CD4-positive, alpha-beta memory T cell (primary cell): ENCODE measurements at regions of chr19 and their contacts with region 1.

Region 1: DNA sequence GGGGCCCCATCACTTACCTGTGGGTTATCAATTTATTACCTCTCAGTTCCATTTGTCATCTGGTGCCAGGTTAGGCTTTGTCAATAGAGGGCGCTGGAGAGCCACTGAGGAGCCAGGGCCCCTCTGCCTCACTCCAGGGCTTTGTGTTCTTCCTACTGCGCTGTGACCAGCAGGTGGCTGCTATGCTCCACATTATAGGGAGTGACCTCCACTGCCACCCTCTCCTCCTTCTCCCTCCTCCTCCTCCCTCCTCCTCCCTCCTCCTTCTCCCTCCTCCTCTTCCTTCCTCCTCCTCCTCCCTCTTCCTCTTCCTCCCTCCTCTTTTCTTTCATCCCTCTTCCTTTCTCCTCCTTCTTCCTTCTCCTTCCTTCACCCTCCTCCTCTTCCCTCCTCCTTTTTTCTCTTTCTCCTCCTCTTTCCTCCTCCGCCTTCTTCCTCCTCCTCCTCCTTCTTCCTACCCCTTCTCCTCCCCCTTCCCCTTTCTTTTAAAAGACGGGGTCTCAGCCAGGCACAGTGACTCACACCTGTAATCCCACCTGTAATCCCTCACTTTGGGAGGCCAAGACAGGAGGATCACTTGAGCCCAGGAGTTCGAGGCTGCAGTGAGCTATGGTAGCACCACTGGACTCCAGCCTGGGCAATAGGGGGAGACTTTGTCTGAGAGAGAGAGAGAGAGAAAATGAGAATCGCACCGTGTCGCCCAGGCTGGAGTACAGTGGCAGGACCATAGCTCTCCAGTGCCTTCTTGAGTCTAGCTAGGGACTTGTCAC is 10.3 kb upstream of the ZBTB32 start:
- DNase-seq: peak; percentile 87 to 89 (median 88)
- H3K4me3 ChIP-seq: no peak overlapping the region
- H3K4me3 Mint-ChIP-seq: peak overlapping the region in 1 of 8 donors; percentile 57
- H3K27ac ChIP-seq: no peak overlapping the region
- H3K27ac Mint-ChIP-seq: peak overlapping the region in 6 of 7 donors; percentile 4 to 75 (median 28)
- H3K4me1 ChIP-seq: no peaks in the 10 kb centered on the region
- H3K4me1 Mint-ChIP-seq: peaks cover 0 to 5% (median 2%) of the 10 kb centered on the region in 4 donors
- H3K27me3 ChIP-seq: no peaks in the 10 kb centered on the region
- H3K27me3 Mint-ChIP-seq: no peaks in the 10 kb centered on the region

Region 2: GRCh38 chr19:35665604-35666003 is 28.4 kb before region 1 on chr19:
- CTCF ChIA-PET with region 1: no interaction called
- POLR2A ChIA-PET with region 1: no interaction called
- intact Hi-C with region 1: no loop called
- DNase-seq: no peak
- H3K4me3 ChIP-seq: no peak overlapping the region
- H3K4me3 Mint-ChIP-seq: no peak overlapping the region
- H3K27ac ChIP-seq: no peak overlapping the region
- H3K27ac Mint-ChIP-seq: no peak overlapping the region
- H3K4me1 ChIP-seq: no peaks in the 10 kb centered on the region
- H3K4me1 Mint-ChIP-seq: peaks cover 0 to 5% (median under 1%) of the 10 kb centered on the region in 4 donors
- H3K27me3 ChIP-seq: no peaks in the 10 kb centered on the region
- H3K27me3 Mint-ChIP-seq: peaks cover 6 to 8% of the 10 kb centered on the region in 2 donors

Region 3: DNA sequence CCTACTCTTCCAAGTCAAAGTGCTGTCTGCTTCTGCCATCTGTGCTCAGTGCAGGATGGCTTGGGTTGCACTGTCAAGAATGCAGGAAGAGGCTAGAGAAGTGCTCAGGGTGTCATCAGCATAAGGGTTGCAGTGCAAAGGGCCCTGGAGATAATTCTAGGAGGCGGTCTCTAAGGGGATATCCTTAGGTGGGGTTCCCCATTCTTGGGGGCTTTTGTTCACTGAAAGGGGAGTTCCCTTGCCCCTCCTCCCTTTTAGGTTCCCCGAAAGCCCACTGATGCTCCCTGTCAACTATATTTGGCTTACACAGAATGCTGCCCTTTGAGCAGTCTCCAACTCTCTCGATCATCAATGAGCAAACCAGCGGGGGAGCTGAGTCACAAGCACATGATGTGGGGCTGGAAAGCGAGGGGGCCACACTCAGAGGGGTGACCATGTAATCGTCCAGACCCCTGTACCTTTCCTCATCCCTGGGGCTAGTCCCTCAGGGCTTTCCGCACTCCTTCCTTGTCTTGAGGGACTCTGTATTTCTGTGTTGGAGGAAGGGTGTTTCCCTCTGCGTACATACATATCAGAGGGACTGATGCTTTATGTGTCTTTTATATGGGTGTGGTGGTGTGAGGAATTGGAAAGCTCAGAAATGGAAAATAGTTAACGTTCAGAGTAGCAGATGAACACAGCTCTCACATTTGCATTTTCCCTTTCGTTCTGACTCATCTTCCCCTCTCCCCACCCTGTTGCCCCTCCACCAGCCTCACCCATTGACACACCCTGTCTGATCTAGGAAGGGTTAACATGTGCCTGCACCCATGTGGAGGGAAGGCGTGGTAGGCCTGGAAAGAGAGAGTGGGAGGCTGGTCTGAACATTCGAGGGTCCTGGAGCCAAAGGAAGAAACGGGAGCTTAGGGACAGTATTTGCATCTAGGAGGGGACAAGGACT is 17.0 kb after region 1 on chr19:
- CTCF ChIA-PET with region 1: interaction called, 54 read pairs
- POLR2A ChIA-PET with region 1: interaction called, 3 read pairs
- intact Hi-C with region 1: no loop called
- DNase-seq: peak in 2 of 5 donors; percentile 5 to 58
- H3K4me3 ChIP-seq: peak overlapping the region in 1 of 2 donors; percentile 11
- H3K4me3 Mint-ChIP-seq: peak overlapping the region in 3 of 8 donors; percentile 21 to 67 (median 57)
- H3K27ac ChIP-seq: peak overlapping the region; percentile 40
- H3K27ac Mint-ChIP-seq: peak overlapping the region; percentile 59 to 83 (median 74)
- H3K4me1 ChIP-seq: peaks cover 60% of the 10 kb centered on the region
- H3K4me1 Mint-ChIP-seq: peaks cover 35 to 56% (median 47%) of the 10 kb centered on the region in 4 donors
- H3K27me3 ChIP-seq: no peaks in the 10 kb centered on the region
- H3K27me3 Mint-ChIP-seq: no peaks in the 10 kb centered on the region

Region 4: DNA sequence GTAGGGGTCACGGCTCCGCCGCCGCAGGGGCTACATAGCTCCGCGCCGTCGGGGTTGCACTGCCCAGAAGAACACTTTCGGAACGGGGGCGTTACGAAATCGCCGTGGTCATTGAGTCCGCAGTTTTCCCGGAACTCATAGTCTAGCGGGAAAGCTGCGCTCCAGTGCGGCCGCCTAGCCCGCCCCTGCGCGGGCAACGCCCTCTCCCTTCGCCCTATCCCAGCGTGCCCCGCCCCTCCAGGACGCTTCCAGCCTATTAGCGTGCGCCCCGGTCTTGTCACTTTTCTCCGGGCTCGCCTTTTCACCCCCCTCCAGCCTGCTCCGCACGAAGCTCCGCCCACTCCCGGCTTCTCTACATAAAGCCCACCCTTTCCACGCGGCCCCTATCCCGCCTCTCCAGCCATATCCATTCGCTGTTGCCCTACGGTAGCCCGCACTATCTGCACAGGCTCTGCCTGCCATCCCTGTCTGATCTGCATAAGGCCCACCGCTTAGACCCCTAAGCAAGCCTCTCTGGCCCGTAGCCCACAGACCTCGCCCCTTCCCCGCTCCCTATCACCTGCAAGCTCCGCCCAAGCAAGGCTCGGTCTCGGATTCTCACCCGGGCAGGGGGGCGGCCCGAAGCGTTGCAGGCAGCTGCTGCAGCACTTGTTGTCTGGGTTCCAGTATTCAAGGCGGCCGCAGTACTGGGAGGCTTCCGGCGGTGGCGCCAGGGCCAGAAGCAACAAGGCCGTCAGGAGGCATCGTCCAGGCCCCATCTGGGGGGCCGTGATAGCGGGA is 46.6 kb after region 1 on chr19:
- CTCF ChIA-PET with region 1: interaction called, 10 read pairs
- POLR2A ChIA-PET with region 1: interaction called, 3 read pairs
- intact Hi-C with region 1: loop called (anchors 1 kb)
- DNase-seq: peak; percentile 90 to 97 (median 91)
- H3K4me3 ChIP-seq: peak overlapping the region; percentile 83 to 88
- H3K4me3 Mint-ChIP-seq: peak overlapping the region; percentile 88 to 98 (median 90)
- H3K27ac ChIP-seq: peak overlapping the region; percentile 77
- H3K27ac Mint-ChIP-seq: peak overlapping the region; percentile 93 to 99 (median 94)
- H3K4me1 ChIP-seq: peaks cover 59% of the 10 kb centered on the region
- H3K4me1 Mint-ChIP-seq: peaks cover 17 to 65% (median 42%) of the 10 kb centered on the region in 4 donors
- H3K27me3 ChIP-seq: no peaks in the 10 kb centered on the region
- H3K27me3 Mint-ChIP-seq: no peaks in the 10 kb centered on the region

Region 5: DNA sequence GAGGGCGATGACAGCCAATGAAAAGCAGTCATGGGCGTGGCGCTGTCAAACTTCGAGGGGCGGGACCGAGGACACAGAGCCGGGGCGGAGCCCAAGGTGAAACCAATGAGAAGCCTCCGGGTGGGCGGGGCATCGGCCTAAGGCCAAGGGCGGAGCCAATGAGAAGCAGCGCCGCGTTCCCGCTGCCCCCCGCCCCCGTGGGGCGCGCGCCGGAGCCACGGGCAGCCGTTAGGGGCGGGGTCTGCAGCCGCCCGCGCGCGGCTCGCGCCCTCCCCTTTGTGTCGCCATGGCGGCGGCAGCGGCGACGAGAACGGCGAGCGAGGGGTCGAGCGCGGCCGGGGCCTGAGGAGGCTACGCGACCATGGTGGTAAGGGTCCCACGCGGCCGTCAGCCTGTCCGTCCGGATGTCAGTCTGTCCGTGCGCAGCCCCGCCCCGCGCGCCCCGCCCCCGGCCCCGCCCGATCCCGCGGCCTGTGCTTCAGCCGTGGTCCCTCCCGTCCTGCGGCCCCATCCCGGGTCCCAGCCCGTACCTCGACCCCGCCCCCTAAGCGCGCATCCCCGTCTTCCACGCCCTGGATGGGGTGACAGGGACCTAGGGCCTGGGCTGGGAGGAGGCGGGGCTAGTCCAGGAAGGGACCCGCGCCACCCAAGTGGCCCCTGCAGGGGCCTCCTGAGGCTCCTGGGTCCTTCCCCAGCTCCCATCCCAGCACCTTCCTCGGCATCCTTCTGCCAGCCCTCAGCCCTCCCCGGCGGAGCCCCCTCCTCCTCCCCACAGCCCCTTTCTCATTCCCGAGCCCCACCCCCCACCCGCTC is 81.5 kb after region 1 on chr19 and contains the start of gene ARHGAP33:
- CTCF ChIA-PET with region 1: interaction called, 4 read pairs
- POLR2A ChIA-PET with region 1: no interaction called
- intact Hi-C with region 1: loop called (anchors 1 kb)
- DNase-seq: peak; percentile 97 to 98 (median 98)
- H3K4me3 ChIP-seq: peak within 1 kb of the TSS; percentile 21 to 65
- H3K4me3 Mint-ChIP-seq: peak within 1 kb of the TSS; percentile 79 to 95 (median 87)
- H3K27ac ChIP-seq: no peak within 1 kb of the TSS
- H3K27ac Mint-ChIP-seq: peak within 1 kb of the TSS; percentile 46 to 87 (median 72)
- H3K4me1 ChIP-seq: peaks cover 15% of the 10 kb centered on the region
- H3K4me1 Mint-ChIP-seq: peaks cover 11 to 37% (median 20%) of the 10 kb centered on the region in 4 donors
- H3K27me3 ChIP-seq: no peaks in the 10 kb centered on the region
- H3K27me3 Mint-ChIP-seq: no peaks in the 10 kb centered on the region
- total RNA-seq, gene ARHGAP33: 15.8 to 19.4 TPM

Region 6: DNA sequence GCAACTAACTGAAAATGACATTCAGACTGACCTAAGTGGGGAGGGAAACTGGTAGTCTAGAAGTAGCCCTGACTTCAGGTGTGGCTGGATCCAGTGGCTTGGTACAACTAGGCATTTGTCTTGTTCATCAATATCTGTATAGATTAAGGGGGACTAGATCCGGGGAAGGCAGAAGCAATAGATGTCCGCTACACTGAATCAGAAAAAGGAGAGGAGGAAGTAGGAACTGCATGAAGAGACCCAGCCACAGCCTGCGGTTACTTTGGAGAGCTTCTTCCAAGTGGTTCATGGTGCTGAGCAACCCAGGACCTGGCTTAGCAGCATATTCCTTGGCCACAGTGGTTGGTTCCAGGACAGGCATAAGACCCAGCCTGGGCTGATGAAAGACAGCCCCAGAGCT is 128.6 kb after region 1 on chr19:
- CTCF ChIA-PET with region 1: interaction called, 13 read pairs
- POLR2A ChIA-PET with region 1: no interaction called
- intact Hi-C with region 1: loop called (anchors 1 kb)
- DNase-seq: no peak
- H3K4me3 ChIP-seq: no peak overlapping the region
- H3K4me3 Mint-ChIP-seq: no peak overlapping the region
- H3K27ac ChIP-seq: no peak overlapping the region
- H3K27ac Mint-ChIP-seq: no peak overlapping the region
- H3K4me1 ChIP-seq: no peaks in the 10 kb centered on the region
- H3K4me1 Mint-ChIP-seq: peaks cover 0 to 1% (median 0%) of the 10 kb centered on the region in 4 donors
- H3K27me3 ChIP-seq: no peaks in the 10 kb centered on the region
- H3K27me3 Mint-ChIP-seq: peaks cover 11 to 18% of the 10 kb centered on the region in 2 donors

Region 7: GRCh38 chr19:35882114-35882832 is 188.3 kb after region 1 on chr19:
- CTCF ChIA-PET with region 1: interaction called, 5 read pairs
- POLR2A ChIA-PET with region 1: no interaction called
- intact Hi-C with region 1: loop called (anchors 1 kb)
- DNase-seq: peak; percentile 71 to 75 (median 72)
- H3K4me3 ChIP-seq: no peak overlapping the region
- H3K4me3 Mint-ChIP-seq: no peak overlapping the region
- H3K27ac ChIP-seq: no peak overlapping the region
- H3K27ac Mint-ChIP-seq: peak overlapping the region in 2 of 7 donors; percentile 57 to 72
- H3K4me1 ChIP-seq: peaks cover 13% of the 10 kb centered on the region
- H3K4me1 Mint-ChIP-seq: peaks cover 8 to 19% (median 9%) of the 10 kb centered on the region in 4 donors
- H3K27me3 ChIP-seq: peaks cover 14% of the 10 kb centered on the region
- H3K27me3 Mint-ChIP-seq: peaks cover 7 to 15% of the 10 kb centered on the region in 2 donors

Region 8: DNA sequence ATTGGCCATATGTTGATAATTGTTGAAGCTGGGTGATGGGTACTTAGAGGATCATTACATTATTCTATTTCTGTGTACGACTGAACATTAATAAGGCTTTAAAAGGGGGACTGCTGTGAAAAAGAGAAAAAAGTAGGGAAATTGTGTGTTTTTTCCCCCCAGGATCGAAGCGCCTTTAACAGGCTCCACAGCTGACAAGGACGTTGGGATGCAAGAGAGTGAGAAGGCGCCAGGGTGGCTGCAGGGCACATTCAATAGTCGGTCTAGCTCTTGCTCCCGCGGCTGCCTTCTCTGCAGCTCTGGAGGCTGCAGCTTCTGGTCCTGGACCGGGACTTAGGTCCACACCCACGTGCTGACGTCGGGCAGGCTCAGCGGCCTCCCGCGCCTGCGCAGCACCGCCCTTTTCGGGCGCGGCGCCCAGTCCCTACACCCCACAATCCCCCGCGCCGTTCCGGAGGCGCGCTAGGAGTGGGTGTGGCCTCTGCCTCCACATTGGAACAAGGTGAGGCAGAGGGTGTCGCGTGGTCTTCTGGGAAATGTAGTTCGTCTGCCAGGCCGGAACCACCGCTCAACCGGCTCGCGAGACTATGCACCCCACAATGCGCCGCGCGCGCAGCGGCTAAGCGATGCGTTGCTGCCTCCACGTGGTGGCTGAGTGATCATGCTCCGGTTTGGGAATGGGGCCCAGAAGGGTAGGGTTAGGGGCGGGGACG is 237.3 kb after region 1 on chr19:
- CTCF ChIA-PET with region 1: interaction called, 6 read pairs
- POLR2A ChIA-PET with region 1: no interaction called
- intact Hi-C with region 1: loop called (anchors 1 kb)
- DNase-seq: peak; percentile 99 to 100 (median 100)
- H3K4me3 ChIP-seq: peak overlapping the region in 1 of 2 donors; percentile 49
- H3K4me3 Mint-ChIP-seq: peak overlapping the region; percentile 76 to 85 (median 80)
- H3K27ac ChIP-seq: peak overlapping the region; percentile 54
- H3K27ac Mint-ChIP-seq: peak overlapping the region; percentile 86 to 97 (median 95)
- H3K4me1 ChIP-seq: peaks cover 47% of the 10 kb centered on the region
- H3K4me1 Mint-ChIP-seq: peaks cover 27 to 62% (median 38%) of the 10 kb centered on the region in 4 donors
- H3K27me3 ChIP-seq: no peaks in the 10 kb centered on the region
- H3K27me3 Mint-ChIP-seq: no peaks in the 10 kb centered on the region